AG04449 (cell line): ENCODE measurements at regions of chr21 and their contacts with region 1.

Region 1: DNA sequence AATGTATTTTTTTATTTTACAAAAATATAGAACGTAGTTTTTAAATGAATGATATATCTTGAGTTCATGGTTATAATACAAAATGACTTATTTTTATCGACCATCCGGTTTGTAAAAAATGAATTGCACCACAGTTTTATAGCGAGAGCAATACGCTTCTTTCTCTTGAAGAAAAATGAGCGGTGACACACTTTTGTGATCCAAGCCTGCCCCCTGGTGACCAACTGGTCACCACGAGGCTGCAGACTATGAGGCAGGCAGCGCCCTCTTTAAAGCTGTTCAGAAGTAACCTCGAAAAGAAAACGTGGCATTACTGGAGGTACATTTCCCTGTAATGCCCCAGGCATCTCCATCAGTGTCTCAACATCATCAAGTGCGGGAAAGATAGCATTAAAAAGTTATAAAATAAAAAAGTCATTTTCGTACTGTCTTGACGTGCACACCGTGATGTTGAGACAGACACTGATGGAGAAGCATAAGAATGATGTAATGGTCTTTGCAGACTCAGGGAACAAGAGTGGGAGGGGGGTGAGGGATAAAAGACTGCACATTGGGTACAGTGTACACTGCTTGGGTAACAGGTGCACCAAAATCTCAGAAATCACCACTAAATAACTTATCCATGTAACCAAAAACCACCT is 734.2 kb upstream of the ADAMTS5 start:
- DNase-seq: peak; percentile 47
- H3K4me3 ChIP-seq: no peak overlapping the region
- CTCF ChIP-seq: peak; percentile 68

Region 2: DNA sequence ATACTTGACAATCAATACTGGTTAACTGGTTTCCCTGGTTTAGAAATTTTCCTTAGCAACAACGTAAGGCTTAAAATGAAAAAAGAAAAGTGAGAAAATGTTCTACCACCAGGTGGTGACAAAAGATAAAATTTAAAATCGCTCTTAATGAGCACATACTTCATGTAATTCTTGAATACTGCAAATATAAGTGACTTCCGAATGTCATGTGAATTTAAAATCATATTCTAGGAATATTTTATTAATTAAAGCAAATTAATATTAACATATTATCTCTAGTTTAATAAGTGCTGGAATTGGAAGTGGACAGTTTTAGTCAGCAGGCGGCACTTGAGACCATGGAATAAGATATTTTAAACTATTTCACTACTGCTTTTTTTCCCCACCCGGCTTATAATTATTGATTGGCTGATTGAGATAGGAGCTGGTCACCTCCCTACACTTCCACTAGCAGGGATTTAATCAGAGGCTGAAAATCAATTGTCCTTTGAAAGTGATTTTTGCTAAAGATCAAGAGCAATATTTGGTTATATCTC is 850.9 kb before region 1 on chr21:
- CTCF ChIA-PET with region 1: interaction called, 57 read pairs
- POLR2A ChIA-PET with region 1: no interaction called
- DNase-seq: no peak
- H3K4me3 ChIP-seq: no peak overlapping the region
- CTCF ChIP-seq: peak; percentile 29

Region 3: GRCh38 chr21:26881504-26882228 is 819.4 kb before region 1 on chr21:
- CTCF ChIA-PET with region 1: interaction called, 14 read pairs
- POLR2A ChIA-PET with region 1: no interaction called
- DNase-seq: no peak
- H3K4me3 ChIP-seq: no peak overlapping the region
- CTCF ChIP-seq: peak; percentile 25

Region 4: DNA sequence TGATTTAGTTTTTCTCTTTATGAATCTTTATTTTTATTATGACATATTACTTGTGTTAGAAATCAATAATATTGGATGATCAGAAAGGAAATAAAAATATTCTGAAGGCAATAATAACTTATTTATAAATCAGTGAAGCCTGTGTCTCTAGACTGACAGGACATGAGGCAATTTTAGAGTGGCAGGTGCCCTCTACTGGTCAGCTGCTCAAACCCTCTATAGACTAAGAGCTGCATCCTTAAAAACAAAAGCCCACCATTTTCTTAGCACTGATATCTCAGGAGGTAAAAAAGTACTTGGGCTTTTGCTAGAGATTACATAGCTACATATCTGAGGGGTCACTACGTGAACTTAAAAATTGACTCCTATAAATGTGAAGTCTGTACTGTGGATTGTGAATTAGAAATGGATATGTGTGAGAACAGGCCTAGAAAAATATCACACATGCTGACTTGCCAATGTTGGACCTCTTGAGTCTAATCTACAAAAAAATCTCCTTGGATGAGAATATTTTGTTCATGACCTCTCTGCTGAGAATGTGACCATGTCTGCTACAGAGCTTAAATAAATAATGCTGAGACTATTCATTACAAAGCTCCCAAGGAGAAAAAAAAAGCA is 136.3 kb before region 1 on chr21:
- CTCF ChIA-PET with region 1: interaction called, 46 read pairs
- POLR2A ChIA-PET with region 1: interaction called, 4 read pairs
- DNase-seq: no peak
- H3K4me3 ChIP-seq: no peak overlapping the region
- CTCF ChIP-seq: peak; percentile 52

Region 5: DNA sequence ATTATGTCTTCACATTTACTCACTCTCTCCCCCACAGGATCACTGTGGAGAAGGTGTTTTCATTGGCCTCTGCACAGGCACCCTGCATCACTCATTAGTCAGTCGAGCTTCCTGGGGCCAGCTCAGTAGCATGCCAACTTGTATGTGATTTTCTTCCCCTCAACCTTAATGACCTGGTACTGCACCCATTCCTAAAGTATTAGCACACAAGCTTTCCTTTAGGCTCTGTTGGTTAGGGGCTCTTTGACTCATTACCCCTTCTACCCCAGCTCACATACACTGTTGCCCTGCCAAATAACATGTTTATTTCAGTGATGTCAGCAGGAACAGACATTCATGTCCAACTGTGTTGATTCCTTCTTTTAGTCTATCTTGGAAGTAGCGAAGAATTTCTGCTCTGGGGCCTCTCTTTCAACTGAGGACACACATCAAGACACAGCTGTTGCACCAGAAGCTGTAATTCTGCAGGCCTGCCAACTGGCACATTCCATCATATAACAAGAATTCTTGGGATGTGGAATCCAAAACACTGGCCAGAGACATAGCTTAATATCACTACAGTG is 130.7 kb before region 1 on chr21:
- CTCF ChIA-PET with region 1: interaction called, 46 read pairs
- POLR2A ChIA-PET with region 1: interaction called, 4 read pairs
- DNase-seq: peak; percentile 92
- H3K4me3 ChIP-seq: no peak overlapping the region
- CTCF ChIP-seq: no peak

Region 6: GRCh38 chr21:28336314-28336713 is 635.2 kb after region 1 on chr21:
- CTCF ChIA-PET with region 1: interaction called, 13 read pairs
- POLR2A ChIA-PET with region 1: no interaction called
- DNase-seq: peak; percentile 76
- H3K4me3 ChIP-seq: no peak overlapping the region
- CTCF ChIP-seq: no peak